A673 (cell line): ENCODE measurements at regions of chr3 and their contacts with region 1.

Region 1: GRCh38 chr3:195616712-195617086 is 33.0 kb upstream of the APOD start:
- DNase-seq: no peak
- H3K4me3 ChIP-seq: no peak overlapping the region
- H3K27ac ChIP-seq: no peak overlapping the region
- H3K4me1 ChIP-seq: no peaks in the 10 kb centered on the region
- H3K27me3 ChIP-seq: no peaks in the 10 kb centered on the region
- CTCF ChIP-seq: no peak

Region 2: DNA sequence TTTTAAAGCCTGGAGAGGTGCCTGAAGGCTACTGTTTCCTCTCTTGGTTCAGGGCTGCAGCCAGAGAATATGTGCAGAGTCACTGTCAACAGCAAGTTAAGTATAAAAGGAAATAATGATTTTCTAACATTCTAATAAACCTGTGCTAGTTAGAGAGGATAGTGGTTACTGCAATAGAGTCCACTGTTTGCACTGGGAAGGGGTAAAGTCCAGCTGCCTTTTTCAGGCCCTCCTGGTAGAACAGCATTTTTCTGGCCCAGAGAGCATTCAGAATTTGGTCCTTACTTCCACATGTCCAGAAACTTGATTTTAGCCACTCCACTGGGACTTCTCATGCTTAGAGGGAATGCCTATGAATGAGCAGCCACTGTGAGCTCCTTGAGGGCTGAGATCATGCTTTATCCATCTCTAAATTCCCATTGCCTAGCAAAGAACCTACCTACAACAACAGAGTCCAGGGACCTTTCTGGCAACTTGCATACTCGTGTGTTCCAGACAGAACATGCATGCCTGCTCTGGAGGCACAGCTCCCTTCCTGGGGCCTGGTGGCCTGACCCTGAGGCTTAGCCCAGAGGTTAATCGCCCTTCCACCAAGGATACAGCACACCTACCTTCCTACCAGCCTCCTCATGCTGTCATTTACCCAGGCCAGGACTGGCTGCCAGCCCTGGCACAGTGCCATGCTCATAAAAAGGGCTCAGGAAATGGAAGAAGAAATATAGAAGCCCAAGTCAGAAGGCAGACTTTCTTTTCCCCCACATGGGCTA is 1079.6 kb before region 1 on chr3:
- CTCF ChIA-PET with region 1: no interaction called
- POLR2A ChIA-PET with region 1: no interaction called
- intact Hi-C with region 1: no loop called
- DNase-seq: peak; percentile 84
- H3K4me3 ChIP-seq: no peak overlapping the region
- H3K27ac ChIP-seq: peak overlapping the region; percentile 39
- H3K4me1 ChIP-seq: peaks cover 15% of the 10 kb centered on the region
- H3K27me3 ChIP-seq: no peaks in the 10 kb centered on the region
- CTCF ChIP-seq: no peak

Region 3: GRCh38 chr3:195596765-195597171 is 19.9 kb before region 1 on chr3:
- CTCF ChIA-PET with region 1: no interaction called
- POLR2A ChIA-PET with region 1: no interaction called
- intact Hi-C with region 1: no loop called
- DNase-seq: no peak
- H3K4me3 ChIP-seq: no peak overlapping the region
- H3K27ac ChIP-seq: no peak overlapping the region
- H3K4me1 ChIP-seq: peaks cover 21% of the 10 kb centered on the region
- H3K27me3 ChIP-seq: no peaks in the 10 kb centered on the region
- CTCF ChIP-seq: no peak

Region 4: GRCh38 chr3:195716865-195717210 is 100.1 kb after region 1 on chr3:
- CTCF ChIA-PET with region 1: no interaction called
- POLR2A ChIA-PET with region 1: no interaction called
- intact Hi-C with region 1: loop called (anchors 5 kb)
- DNase-seq: no peak
- H3K4me3 ChIP-seq: no peak overlapping the region
- H3K27ac ChIP-seq: no peak overlapping the region
- H3K4me1 ChIP-seq: no peaks in the 10 kb centered on the region
- H3K27me3 ChIP-seq: no peaks in the 10 kb centered on the region
- CTCF ChIP-seq: no peak